Activated CD4-positive, alpha-beta memory T cell treated with anti-CD3 and anti-CD28 coated beads, Interleukin-2, amount 10 ng/mL, durations not matched to agents 7 days and 5 days (primary cell): ENCODE measurements at regions of chr17 and their contacts with region 1.

Region 1: DNA sequence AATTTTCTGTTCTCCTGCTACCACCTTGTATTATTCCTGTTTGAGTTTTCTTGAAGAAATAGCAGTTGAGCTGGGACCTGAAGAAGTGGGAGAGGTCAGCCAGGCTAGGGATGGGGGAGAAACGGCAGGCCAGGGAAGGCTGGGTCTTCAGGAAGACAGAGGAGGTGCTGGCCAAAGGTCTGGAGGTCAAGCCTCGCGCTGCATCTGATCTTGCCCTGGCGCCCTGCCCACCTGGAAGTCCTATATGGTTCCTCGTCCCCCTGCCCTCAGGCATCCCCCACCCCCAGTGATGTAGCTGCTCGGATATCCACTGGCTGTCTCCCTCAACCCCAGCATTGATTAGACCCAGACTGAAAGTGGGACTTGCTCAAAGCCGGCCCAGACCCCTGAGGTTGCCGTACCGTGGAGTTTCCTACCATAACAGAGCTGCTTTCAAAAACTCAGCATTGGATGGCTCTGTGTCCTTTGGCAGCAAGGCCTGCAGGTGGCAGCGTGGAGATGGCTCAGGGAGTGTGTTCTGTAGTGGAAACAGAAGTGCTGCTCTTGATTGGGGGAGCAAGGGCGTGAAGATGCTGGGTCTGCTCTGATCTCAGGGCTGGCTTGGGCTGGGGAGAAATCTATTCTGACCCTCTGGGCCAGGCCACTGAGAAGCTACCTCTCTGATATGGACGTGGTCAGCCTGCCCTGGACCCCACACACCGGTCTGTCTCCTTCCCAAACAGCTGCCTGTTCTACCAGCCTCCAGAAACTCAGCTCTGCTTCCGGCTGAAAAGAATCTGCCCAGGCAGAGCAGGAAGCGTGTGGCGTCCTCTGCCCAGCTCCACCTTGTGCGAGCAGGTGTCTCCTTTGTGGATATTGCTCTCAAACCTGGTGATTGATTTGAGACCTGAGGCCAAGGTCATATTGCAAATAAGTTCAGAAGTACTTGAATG is 107.0 kb upstream of the CACNG5 start:
- DNase-seq: peak; percentile 63
- H3K4me3 Mint-ChIP-seq: no peak overlapping the region
- H3K27ac Mint-ChIP-seq: peak overlapping the region; percentile 18
- H3K4me1 Mint-ChIP-seq: peaks cover 51% of the 10 kb centered on the region
- H3K27me3 Mint-ChIP-seq: no peaks in the 10 kb centered on the region

Region 2: DNA sequence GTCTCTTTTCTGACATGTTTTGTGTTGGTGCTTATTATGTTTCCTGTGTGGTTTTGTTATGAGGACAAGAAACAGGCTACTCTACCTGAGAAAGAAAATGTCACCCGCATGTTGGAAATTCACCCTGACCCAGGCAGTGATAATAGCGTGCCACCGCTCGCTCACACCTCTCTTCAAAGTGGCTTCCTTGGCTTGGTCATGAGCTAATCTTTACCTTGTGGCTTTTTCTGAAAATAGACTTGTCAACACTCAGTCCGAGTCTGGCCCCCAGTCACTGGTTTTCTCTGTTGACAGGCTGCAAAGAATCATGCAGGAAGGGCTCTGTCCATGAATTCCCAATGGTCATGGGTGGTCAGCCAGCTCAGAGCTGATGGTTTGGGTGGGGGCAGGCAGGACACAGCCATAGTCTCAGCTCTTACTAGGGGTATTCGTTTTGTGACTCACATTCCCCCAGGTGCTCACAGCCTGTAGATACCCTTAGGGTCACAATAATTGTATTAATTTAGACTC is 14.3 kb before region 1 on chr17:
- CTCF ChIA-PET with region 1: interaction called, 13 read pairs
- POLR2A ChIA-PET with region 1: interaction called, 4 read pairs
- DNase-seq: peak; percentile 71
- H3K4me3 Mint-ChIP-seq: no peak overlapping the region
- H3K27ac Mint-ChIP-seq: peak overlapping the region; percentile 82
- H3K4me1 Mint-ChIP-seq: peaks cover 63% of the 10 kb centered on the region
- H3K27me3 Mint-ChIP-seq: no peaks in the 10 kb centered on the region

Region 3: GRCh38 chr17:66879612-66880011 is 151.7 kb after region 1 on chr17:
- CTCF ChIA-PET with region 1: no interaction called
- POLR2A ChIA-PET with region 1: no interaction called
- DNase-seq: no peak
- H3K4me3 Mint-ChIP-seq: no peak overlapping the region
- H3K27ac Mint-ChIP-seq: no peak overlapping the region
- H3K4me1 Mint-ChIP-seq: no peaks in the 10 kb centered on the region
- H3K27me3 Mint-ChIP-seq: peaks cover 9% of the 10 kb centered on the region

Region 4: DNA sequence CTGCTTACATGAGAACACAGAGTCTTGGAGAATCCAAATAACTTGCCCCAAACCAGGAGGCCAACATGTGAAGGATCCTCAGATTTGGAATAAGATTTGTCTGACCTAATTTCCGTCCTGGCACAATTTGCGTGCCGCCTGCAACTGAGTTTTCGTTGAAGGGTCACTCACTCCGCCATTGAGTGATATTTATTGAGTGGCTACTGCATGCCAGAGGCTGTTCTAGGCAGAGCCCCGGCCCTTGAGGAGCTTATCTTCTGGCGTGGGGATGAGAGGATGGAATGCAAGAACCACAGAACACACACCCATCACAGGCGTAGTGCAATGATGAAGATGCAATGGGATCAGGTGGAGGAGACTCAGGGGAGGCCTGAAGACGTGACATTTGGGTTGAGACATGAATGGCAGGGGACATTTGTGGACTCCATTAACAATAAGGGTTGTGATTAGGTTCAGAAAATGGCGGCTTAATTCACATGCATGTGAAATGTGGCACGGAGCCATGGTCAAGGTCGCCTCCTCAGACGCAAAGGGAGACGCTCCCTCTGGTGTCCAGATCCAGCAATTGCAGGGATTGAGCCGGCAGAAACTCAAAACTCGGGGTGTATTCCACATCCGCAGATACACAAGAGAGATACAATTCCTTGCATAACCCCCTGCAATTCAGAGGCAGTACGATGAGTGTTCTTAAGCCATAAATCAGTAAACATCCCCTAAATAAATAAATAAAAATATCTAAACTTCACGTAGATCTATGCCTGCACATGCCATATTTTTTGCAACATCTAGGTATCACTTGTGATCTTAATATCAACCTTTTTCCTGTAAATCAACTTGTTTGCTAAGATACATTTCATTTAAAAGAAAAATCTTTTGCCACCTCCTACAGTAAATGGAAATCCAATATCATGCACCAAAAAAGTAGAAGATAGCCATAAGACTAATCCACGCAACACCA is 178.7 kb after region 1 on chr17:
- CTCF ChIA-PET with region 1: interaction called, 10 read pairs
- POLR2A ChIA-PET with region 1: no interaction called
- DNase-seq: peak; percentile 71
- H3K4me3 Mint-ChIP-seq: no peak overlapping the region
- H3K27ac Mint-ChIP-seq: no peak overlapping the region
- H3K4me1 Mint-ChIP-seq: peaks cover 5% of the 10 kb centered on the region
- H3K27me3 Mint-ChIP-seq: peaks cover 18% of the 10 kb centered on the region